CD4-positive, alpha-beta memory T cell (primary cell): ENCODE measurements at regions of chr2 and their contacts with region 1.

Region 1: GRCh38 chr2:232438951-232439757 is 16.8 kb upstream of the ALPI start:
- DNase-seq: peak in 3 of 5 donors; percentile 15 to 34 (median 27)
- H3K4me3 ChIP-seq: no peak overlapping the region
- H3K4me3 Mint-ChIP-seq: no peak overlapping the region
- H3K27ac ChIP-seq: no peak overlapping the region
- H3K27ac Mint-ChIP-seq: no peak overlapping the region
- H3K4me1 ChIP-seq: no peaks in the 10 kb centered on the region
- H3K4me1 Mint-ChIP-seq: peaks cover 2 to 6% (median 3%) of the 10 kb centered on the region in 4 donors
- H3K27me3 ChIP-seq: no peaks in the 10 kb centered on the region
- H3K27me3 Mint-ChIP-seq: peaks cover 3 to 5% of the 10 kb centered on the region in 2 donors

Region 2: DNA sequence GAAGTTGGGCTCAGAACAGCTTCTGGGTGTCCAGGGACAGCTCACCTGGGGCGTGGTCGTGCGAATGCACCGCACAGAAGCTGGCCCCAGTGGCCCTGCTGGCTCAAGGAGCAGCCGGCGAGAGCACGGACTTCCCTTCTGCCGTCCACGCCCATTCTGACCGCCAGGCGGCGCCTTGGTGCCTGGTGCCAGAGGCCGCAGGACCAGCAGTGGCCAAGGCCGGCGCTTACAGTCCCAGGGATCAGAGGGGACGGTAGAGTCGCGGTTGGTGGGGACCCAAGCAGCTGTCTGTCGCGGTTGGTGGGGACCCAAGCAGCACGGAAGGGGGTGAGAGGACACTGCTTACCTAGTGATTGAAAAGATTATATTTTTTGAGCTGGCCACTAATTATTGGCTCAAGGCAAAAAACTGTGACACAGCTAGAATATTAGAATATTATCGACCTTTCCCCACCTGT is 538.6 kb before region 1 on chr2:
- CTCF ChIA-PET with region 1: interaction called, 15 read pairs
- POLR2A ChIA-PET with region 1: no interaction called
- intact Hi-C with region 1: loop called (anchors 1 kb)
- DNase-seq: peak in 3 of 5 donors; percentile 13 to 30 (median 22)
- H3K4me3 ChIP-seq: no peak overlapping the region
- H3K4me3 Mint-ChIP-seq: no peak overlapping the region
- H3K27ac ChIP-seq: no peak overlapping the region
- H3K27ac Mint-ChIP-seq: peak overlapping the region in 1 of 7 donors; percentile 25
- H3K4me1 ChIP-seq: no peaks in the 10 kb centered on the region
- H3K4me1 Mint-ChIP-seq: no peaks in the 10 kb centered on the region
- H3K27me3 ChIP-seq: no peaks in the 10 kb centered on the region
- H3K27me3 Mint-ChIP-seq: peaks cover 3 to 4% of the 10 kb centered on the region in 2 donors

Region 3: GRCh38 chr2:231909631-231910030 is 529.5 kb before region 1 on chr2:
- CTCF ChIA-PET with region 1: interaction called, 33 read pairs
- POLR2A ChIA-PET with region 1: no interaction called
- intact Hi-C with region 1: no loop called
- DNase-seq: no peak
- H3K4me3 ChIP-seq: no peak overlapping the region
- H3K4me3 Mint-ChIP-seq: no peak overlapping the region
- H3K27ac ChIP-seq: no peak overlapping the region
- H3K27ac Mint-ChIP-seq: peak overlapping the region in 1 of 7 donors; percentile 55
- H3K4me1 ChIP-seq: no peaks in the 10 kb centered on the region
- H3K4me1 Mint-ChIP-seq: peaks cover 5 to 16% (median 6%) of the 10 kb centered on the region in 4 donors
- H3K27me3 ChIP-seq: no peaks in the 10 kb centered on the region
- H3K27me3 Mint-ChIP-seq: peaks cover 0 to 2% of the 10 kb centered on the region in 2 donors

Region 4: GRCh38 chr2:232333361-232334270 is 105.5 kb before region 1 on chr2:
- CTCF ChIA-PET with region 1: interaction called, 3 read pairs
- POLR2A ChIA-PET with region 1: no interaction called
- intact Hi-C with region 1: loop called (anchors 2 kb)
- DNase-seq: no peak
- H3K4me3 ChIP-seq: no peak overlapping the region
- H3K4me3 Mint-ChIP-seq: no peak overlapping the region
- H3K27ac ChIP-seq: no peak overlapping the region
- H3K27ac Mint-ChIP-seq: no peak overlapping the region
- H3K4me1 ChIP-seq: no peaks in the 10 kb centered on the region
- H3K4me1 Mint-ChIP-seq: no peaks in the 10 kb centered on the region
- H3K27me3 ChIP-seq: no peaks in the 10 kb centered on the region
- H3K27me3 Mint-ChIP-seq: no peaks in the 10 kb centered on the region

Region 5: GRCh38 chr2:232485757-232486557 is 46.8 kb after region 1 on chr2:
- CTCF ChIA-PET with region 1: no interaction called
- POLR2A ChIA-PET with region 1: no interaction called
- intact Hi-C with region 1: no loop called
- DNase-seq: no peak
- H3K4me3 ChIP-seq: no peak overlapping the region
- H3K4me3 Mint-ChIP-seq: no peak overlapping the region
- H3K27ac ChIP-seq: no peak overlapping the region
- H3K27ac Mint-ChIP-seq: no peak overlapping the region
- H3K4me1 ChIP-seq: no peaks in the 10 kb centered on the region
- H3K4me1 Mint-ChIP-seq: peaks cover 2 to 25% (median 9%) of the 10 kb centered on the region in 4 donors
- H3K27me3 ChIP-seq: no peaks in the 10 kb centered on the region
- H3K27me3 Mint-ChIP-seq: peaks cover 22 to 36% of the 10 kb centered on the region in 2 donors